GM12878 (cell line): ENCODE measurements at regions of chrX and their contacts with region 1.

Region 1: DNA sequence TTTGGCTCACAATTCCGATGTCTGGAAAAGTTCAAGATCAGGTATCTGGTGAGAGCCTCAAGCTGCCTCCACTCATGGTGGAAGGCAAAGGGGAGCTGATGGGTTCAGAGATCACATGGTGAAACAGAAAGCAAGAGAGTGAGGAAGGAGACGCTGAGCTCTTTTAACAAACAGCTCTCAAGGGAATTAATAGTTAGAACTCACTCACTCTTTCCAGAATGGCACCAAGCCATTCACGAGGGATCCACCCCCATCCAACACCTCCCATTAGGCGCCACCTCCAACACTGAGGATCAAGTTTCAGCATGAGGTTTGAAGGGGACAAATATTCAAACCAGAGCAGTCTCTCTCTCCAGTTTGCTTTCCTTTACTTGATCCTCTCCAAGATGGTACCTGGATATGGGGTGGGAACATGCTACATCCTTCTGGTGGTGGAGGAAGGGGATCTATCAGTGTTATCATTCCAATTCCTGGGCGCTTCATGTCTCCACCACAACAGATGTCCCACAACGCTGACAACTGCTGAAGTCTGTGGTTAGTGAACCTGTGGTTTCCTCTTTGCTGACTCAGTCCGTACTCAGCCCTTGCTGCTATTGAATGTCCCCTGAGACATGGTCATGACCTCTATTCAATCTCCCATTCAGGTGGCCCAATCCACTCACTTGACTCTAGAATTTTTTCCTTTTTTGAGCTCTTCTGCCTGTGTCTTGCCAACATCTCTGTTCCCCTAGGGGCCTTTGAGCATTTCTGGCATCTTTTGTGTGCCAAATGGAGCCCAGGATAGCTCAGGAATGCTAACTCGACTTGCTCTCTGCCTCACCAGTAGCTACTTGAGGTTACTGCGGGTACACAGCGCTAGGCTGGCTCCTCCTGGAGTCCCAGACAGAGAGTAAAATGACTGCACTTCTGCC is 395.2 kb downstream of the MID1IP1 start:
- DNase-seq: peak; percentile 90
- ATAC-seq: peak; percentile 95
- H3K4me3 ChIP-seq: no peak overlapping the region
- H3K27ac ChIP-seq: peak overlapping the region; percentile 54
- H3K4me1 ChIP-seq: peaks cover 18% of the 10 kb centered on the region
- H3K27me3 ChIP-seq: no peaks in the 10 kb centered on the region
- CTCF ChIP-seq: no peak
- EP300 ChIP-seq: peak; percentile 49 to 80; a peak in 3 of 4 replicates
- POLR2A ChIP-seq: no peak
- RAD21 ChIP-seq: no peak

Region 2: GRCh38 chrX:38939067-38939466 is 257.4 kb before region 1 on chrX:
- CTCF ChIA-PET with region 1: no interaction called
- POLR2A ChIA-PET with region 1: no interaction called
- RAD21 ChIA-PET with region 1: no interaction called
- SMC1A ChIA-PET with region 1: no interaction called
- in situ Hi-C with region 1: no loop called
- intact Hi-C with region 1: no loop called
- DNase-seq: no peak
- ATAC-seq: no peak
- H3K4me3 ChIP-seq: no peak overlapping the region
- H3K27ac ChIP-seq: no peak overlapping the region
- H3K4me1 ChIP-seq: no peaks in the 10 kb centered on the region
- H3K27me3 ChIP-seq: no peaks in the 10 kb centered on the region
- CTCF ChIP-seq: no peak
- EP300 ChIP-seq: no peak
- POLR2A ChIP-seq: no peak
- RAD21 ChIP-seq: no peak

Region 3: DNA sequence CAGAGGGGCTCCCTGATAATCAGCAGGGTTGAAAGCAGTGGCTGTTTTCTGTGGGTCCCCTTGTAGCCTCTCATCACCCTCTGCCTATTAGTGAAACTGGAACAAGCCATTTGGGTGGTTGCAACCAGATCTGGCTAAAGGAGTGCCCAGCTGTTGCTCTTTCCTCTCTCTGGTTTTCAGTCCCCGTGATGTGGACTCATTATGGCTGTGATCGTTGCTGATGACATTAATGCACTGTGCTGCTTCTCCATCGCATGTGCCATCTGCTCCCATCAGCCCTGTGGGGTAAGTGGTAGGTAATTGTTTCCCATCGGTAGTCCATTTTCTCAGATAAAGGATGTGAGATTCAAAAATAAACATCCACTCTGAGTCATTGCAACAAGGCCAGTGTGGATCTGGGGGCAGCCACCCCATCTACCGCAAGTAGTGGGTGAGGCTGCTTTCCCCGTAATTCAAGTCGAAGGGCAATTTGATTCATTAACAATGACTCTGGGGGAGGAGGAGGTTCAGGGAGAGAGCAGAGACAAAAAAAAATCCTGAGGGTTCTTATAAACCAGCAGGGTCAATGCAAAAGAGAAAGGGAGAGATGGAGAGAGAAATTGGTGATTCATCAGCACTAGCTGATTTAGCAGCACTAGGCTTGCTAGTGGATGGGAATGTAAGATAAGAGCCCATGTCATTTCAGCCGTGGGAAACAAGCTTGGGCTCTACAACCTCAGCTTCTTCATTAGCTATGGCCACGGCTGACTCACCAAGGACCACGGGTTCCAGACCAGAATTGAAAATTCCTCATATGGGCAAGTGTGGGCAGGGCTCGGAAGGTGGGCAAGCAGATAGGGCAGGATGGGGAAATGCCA is 37.4 kb before region 1 on chrX:
- CTCF ChIA-PET with region 1: interaction called, 20 read pairs
- POLR2A ChIA-PET with region 1: interaction called, 17 read pairs
- RAD21 ChIA-PET with region 1: interaction called, 48 read pairs
- SMC1A ChIA-PET with region 1: interaction called, 65 read pairs
- in situ Hi-C with region 1: no loop called
- intact Hi-C with region 1: loop called (anchors 5 kb)
- DNase-seq: peak; percentile 67
- ATAC-seq: peak; percentile 76
- H3K4me3 ChIP-seq: no peak overlapping the region
- H3K27ac ChIP-seq: peak overlapping the region; percentile 43; the same call in 1 of the 2 replicates
- H3K4me1 ChIP-seq: peaks cover 8% of the 10 kb centered on the region; the same call in 1 of the 2 replicates
- H3K27me3 ChIP-seq: no peaks in the 10 kb centered on the region
- CTCF ChIP-seq: no peak
- EP300 ChIP-seq: no peak
- POLR2A ChIP-seq: no peak
- RAD21 ChIP-seq: no peak

Region 4: DNA sequence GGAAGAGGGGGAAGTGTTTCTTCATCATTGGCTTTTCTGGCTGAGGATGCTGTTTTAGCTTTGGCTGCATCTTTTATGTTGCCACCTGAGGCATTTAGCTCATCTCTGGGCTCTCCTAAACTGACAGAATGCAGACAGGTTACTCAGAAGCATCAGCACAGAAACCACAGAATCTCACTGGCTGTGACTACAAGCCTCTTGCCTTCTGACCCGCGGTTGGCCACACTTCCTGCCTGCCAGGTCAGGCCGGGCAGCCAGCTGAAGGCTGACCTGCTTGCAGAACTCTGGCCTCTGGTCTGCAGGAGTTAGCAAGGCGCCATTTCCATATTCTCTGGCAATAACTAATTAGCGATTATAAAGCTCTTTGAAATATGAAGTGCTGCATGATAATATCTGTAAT is 28.7 kb before region 1 on chrX:
- CTCF ChIA-PET with region 1: interaction called, 20 read pairs
- POLR2A ChIA-PET with region 1: interaction called, 6 read pairs
- RAD21 ChIA-PET with region 1: interaction called, 28 read pairs
- SMC1A ChIA-PET with region 1: interaction called, 36 read pairs
- in situ Hi-C with region 1: no loop called
- intact Hi-C with region 1: loop called (anchors 1 kb)
- DNase-seq: no peak
- ATAC-seq: peak; percentile 88
- H3K4me3 ChIP-seq: no peak overlapping the region
- H3K27ac ChIP-seq: no peak overlapping the region
- H3K4me1 ChIP-seq: peaks cover 3% of the 10 kb centered on the region; the same call in 1 of the 2 replicates
- H3K27me3 ChIP-seq: no peaks in the 10 kb centered on the region
- CTCF ChIP-seq: no peak
- EP300 ChIP-seq: no peak
- POLR2A ChIP-seq: no peak
- RAD21 ChIP-seq: no peak

Region 5: DNA sequence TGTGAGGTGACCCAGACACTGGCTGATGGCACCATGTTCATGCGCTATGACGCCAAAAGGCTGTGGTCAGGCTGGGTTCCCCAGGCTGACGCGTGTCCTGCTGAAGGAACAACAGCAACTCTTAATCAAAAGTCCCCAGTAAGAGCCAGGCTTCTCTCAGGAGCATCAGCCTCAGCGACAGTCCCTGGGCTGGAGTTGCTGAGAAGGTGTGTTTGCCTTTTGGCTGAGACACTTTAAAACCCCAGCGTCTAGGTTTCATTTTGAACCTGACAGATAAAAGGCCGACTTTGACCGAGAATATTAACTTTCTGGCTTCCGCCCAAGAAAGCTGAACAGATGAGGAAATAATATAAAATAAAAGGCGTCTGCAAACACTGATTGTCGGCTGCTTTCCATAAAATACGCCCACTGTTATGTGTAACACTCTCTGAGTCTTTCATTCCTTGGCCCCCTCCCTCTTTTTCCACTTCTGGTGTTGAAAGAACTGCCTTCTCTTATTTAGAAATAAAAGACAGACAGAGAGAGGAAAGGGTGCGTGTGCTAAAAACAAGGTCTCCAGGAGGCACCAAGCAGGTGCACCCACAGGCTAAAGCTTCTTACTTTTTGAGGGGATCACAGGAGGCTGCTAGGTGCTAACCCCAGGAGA is 21.6 kb before region 1 on chrX:
- CTCF ChIA-PET with region 1: interaction called, 6 read pairs
- POLR2A ChIA-PET with region 1: interaction called, 21 read pairs
- RAD21 ChIA-PET with region 1: interaction called, 28 read pairs
- SMC1A ChIA-PET with region 1: interaction called, 36 read pairs
- in situ Hi-C with region 1: no loop called
- intact Hi-C with region 1: loop called (anchors 1 kb)
- DNase-seq: no peak
- ATAC-seq: peak; percentile 82
- H3K4me3 ChIP-seq: no peak overlapping the region
- H3K27ac ChIP-seq: no peak overlapping the region
- H3K4me1 ChIP-seq: peaks cover 3% of the 10 kb centered on the region; the same call in 1 of the 2 replicates
- H3K27me3 ChIP-seq: no peaks in the 10 kb centered on the region; a peak in 1 of 4 replicates
- CTCF ChIP-seq: no peak
- EP300 ChIP-seq: no peak
- POLR2A ChIP-seq: no peak
- RAD21 ChIP-seq: no peak

Region 6: GRCh38 chrX:39212456-39212855 is 16.0 kb after region 1 on chrX:
- CTCF ChIA-PET with region 1: interaction called, 4 read pairs
- POLR2A ChIA-PET with region 1: no interaction called
- RAD21 ChIA-PET with region 1: interaction called, 5 read pairs
- SMC1A ChIA-PET with region 1: interaction called, 13 read pairs
- in situ Hi-C with region 1: no loop called
- intact Hi-C with region 1: no loop called
- DNase-seq: no peak
- ATAC-seq: no peak
- H3K4me3 ChIP-seq: no peak overlapping the region
- H3K27ac ChIP-seq: no peak overlapping the region
- H3K4me1 ChIP-seq: no peaks in the 10 kb centered on the region
- H3K27me3 ChIP-seq: peaks cover 0 to 2% of the 10 kb centered on the region in 2 experiments; a peak in 1 of 4 replicates
- CTCF ChIP-seq: no peak
- EP300 ChIP-seq: no peak
- POLR2A ChIP-seq: no peak
- RAD21 ChIP-seq: no peak

Region 7: GRCh38 chrX:39513836-39514235 is 317.4 kb after region 1 on chrX:
- CTCF ChIA-PET with region 1: no interaction called
- POLR2A ChIA-PET with region 1: no interaction called
- RAD21 ChIA-PET with region 1: no interaction called
- SMC1A ChIA-PET with region 1: no interaction called
- in situ Hi-C with region 1: no loop called
- intact Hi-C with region 1: no loop called
- DNase-seq: no peak
- ATAC-seq: no peak
- H3K4me3 ChIP-seq: no peak overlapping the region
- H3K27ac ChIP-seq: no peak overlapping the region
- H3K4me1 ChIP-seq: no peaks in the 10 kb centered on the region
- H3K27me3 ChIP-seq: no peaks in the 10 kb centered on the region
- CTCF ChIP-seq: no peak
- EP300 ChIP-seq: no peak
- POLR2A ChIP-seq: no peak
- RAD21 ChIP-seq: no peak